ENCODE measurements at regions of chr7 and their contacts with region 1.

Region 1: GRCh38 chr7:142459551-142459963 is 201.7 kb upstream of the PRSS58 start:
- DNase-seq: peak; percentile 77
- H3K4me3 Mint-ChIP-seq: no peak overlapping the region
- H3K27ac Mint-ChIP-seq: peak overlapping the region; percentile 34
- H3K4me1 Mint-ChIP-seq: peaks cover 50% of the 10 kb centered on the region
- H3K27me3 Mint-ChIP-seq: no peaks in the 10 kb centered on the region

Region 2: DNA sequence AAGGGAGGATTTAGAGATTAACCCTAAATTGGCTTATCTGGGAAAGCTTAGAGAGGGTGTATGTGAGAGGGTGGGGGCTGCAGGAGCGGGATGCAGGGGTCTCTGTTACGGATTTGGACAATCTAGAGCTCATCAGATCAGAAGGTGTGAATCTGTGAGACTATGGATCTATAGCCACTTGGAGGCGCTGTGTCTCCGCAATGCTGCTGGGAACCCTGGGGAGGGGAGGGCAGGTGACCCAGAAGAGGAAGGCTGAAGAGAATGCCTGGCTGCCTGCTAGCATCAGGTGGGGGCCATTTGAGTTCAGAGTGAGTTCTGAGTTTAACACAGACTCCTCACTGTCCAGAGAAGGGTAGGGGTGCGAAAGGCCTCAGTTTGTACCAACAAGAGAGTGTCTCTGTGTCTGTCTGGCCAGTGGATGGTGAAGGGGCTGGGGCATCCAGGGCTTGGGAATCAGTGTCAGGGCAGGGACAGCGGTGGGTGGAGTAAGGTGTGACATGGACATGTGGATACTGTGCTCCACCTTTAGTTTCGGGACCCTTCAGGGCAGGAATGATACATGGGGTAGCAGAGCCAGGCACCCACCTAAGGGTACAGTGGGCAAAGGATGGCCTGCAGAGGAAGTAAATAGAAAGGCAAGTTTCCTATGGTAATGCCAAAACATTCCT is 14.4 kb before region 1 on chr7:
- intact Hi-C with region 1: loop called (anchors 1 kb)
- DNase-seq: peak; percentile 81
- H3K4me3 Mint-ChIP-seq: no peak overlapping the region
- H3K27ac Mint-ChIP-seq: no peak overlapping the region
- H3K4me1 Mint-ChIP-seq: peaks cover 32% of the 10 kb centered on the region
- H3K27me3 Mint-ChIP-seq: peaks cover 11% of the 10 kb centered on the region

Region 3: GRCh38 chr7:142482891-142483658 is 23.5 kb after region 1 on chr7:
- intact Hi-C with region 1: loop called (anchors 1 kb)
- DNase-seq: peak; percentile 86
- H3K4me3 Mint-ChIP-seq: peak overlapping the region; percentile 14
- H3K27ac Mint-ChIP-seq: peak overlapping the region; percentile 78
- H3K4me1 Mint-ChIP-seq: peaks cover 24% of the 10 kb centered on the region
- H3K27me3 Mint-ChIP-seq: no peaks in the 10 kb centered on the region

Region 4: DNA sequence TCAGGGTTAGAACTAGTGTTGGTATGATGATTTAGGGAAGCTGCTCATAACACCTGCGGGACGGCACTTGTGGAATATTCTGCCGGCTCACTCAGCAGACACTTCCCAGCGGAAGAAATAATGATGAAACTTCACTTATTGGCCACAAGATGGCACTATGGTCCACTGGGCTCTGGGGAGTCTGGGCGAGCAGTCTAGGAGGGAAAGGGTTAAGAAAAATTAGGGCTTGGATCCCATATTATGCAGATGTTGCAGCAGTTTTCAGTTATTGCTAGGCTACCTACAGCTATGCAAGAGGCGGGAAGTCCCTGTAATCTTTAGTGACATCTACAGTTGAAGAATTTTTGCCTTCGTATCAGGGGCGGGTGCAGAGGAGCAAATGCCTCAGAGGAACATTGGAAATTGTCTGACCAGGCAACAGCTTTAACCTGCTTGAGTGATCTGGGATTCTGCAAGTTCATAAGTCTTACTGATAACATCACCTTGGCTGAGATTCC is 37.0 kb after region 1 on chr7:
- intact Hi-C with region 1: loop called (anchors 5 kb)
- DNase-seq: peak; percentile 71
- H3K4me3 Mint-ChIP-seq: peak overlapping the region; percentile 28
- H3K27ac Mint-ChIP-seq: peak overlapping the region; percentile 57
- H3K4me1 Mint-ChIP-seq: peaks cover 28% of the 10 kb centered on the region
- H3K27me3 Mint-ChIP-seq: peaks cover 3% of the 10 kb centered on the region

Measured in activated CD4-positive, alpha-beta T cell treated with anti-CD3 and anti-CD28 coated beads, Interleukin-2, amount 10 ng/mL, durations not matched to agents 24 days and 14 days (primary cell).